Sigmoid colon (tissue), 7 donors: ENCODE measurements at regions of chr9 and their contacts with region 1.

Region 1: DNA sequence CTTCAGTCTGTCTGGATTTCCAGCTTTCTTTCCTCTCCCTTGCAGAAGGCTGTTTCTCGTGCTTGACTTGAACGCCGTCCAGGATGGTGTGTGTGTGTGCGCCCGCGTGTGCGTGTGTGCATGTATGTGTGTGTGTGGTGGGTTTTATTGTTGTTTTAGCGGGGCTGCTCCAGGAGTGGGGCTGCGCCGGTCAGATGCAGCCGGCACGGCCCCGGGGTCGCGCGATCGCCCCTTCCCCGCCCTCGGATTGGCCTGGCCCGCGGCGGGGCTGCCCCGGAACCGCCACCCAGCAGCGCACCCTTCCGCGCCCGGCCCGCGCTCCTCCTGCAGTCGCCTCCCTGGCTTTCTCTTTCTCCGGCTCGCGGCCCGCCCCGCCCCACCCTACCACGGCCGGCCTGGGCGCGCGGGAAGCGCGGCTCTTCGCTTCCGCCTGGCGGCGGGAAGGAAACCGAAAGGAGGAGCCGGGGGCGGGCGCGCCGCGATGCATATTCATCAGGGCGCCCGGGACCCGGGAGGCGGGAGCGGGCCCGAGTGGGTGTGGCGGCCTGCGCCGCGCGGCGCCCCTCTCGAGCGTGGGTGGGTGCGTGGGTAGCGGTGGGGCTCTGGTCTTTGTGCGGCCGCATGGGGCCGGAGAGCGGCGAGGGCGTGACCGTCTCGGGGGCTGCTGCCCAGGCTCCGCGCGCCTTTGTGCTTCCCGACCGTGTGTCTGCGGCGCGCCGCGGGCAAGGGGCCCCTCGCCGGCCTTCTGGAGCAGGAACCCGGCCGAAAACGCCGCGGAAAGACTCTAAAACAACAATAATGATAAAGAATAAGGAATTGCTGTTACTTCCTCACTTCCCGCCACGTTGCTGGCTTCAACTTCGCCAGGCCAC is 8.5 kb upstream of the NFIB start:
- DNase-seq: peak; percentile 96
- H3K4me3 ChIP-seq: peak overlapping the region; percentile 77 to 90 (median 82)
- H3K27ac ChIP-seq: peak overlapping the region; percentile 98 to 99 (median 98)
- H3K4me1 ChIP-seq: peaks cover 0 to 66% (median 56%) of the 10 kb centered on the region in 4 donors
- H3K27me3 ChIP-seq: no peaks in the 10 kb centered on the region
- CTCF ChIP-seq: peak in 3 of 4 experiments; percentile 37 to 75 (median 47)
- EP300 ChIP-seq: no peak
- POLR2A ChIP-seq: no peak

Region 2: DNA sequence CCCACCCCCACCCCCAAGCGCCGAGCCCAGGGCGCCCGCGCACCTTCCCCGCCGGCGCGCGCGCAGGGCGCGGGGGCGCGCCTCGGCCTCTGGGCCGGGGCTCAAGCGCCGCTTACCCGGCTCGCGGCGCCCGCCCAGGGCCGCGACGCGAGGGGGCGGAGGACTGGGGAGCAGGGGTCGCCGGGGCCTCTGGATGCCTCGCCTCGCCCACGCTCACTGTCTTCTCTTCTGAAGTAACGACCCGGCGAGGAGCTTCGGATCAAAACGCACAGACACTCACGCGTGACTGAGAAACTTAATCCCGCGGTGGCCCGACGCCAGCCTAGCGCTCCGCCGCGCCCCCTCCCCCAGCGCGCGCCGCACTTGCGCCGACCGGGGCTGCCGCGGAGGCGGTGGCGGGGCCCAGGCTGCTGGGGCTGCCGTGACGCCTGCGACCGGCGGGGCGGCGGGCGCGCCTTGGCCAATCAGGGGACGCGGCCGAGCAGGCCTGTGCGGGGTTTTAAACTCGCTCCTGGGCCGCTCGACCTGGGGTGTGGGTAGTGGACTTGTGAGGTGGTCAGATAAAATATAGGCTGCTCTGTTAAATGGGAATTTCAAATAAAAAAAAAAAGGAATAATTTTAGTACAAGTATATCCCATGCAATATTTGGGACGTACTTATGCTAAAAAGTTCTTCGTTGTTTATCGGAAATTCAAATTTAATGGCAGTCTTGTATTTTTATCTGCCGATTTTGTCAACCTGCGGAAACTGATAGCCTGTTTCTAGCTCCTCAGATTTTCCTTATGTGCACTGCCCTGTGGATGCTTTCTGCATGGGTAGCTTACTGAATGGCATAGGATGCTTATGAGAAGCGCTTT is 1042.9 kb before region 1 on chr9 and contains the start of gene MPDZ:
- intact Hi-C with region 1: loop called (anchors 5 kb)
- DNase-seq: peak; percentile 85
- H3K4me3 ChIP-seq: peak within 1 kb of the TSS; percentile 61 to 75 (median 70)
- H3K27ac ChIP-seq: peak within 1 kb of the TSS; percentile 90 to 97 (median 95)
- H3K4me1 ChIP-seq: peaks cover 0 to 74% (median 58%) of the 10 kb centered on the region in 4 donors
- H3K27me3 ChIP-seq: no peaks in the 10 kb centered on the region
- CTCF ChIP-seq: no peak
- EP300 ChIP-seq: no peak
- POLR2A ChIP-seq: no peak
- total RNA-seq, gene MPDZ: 62.8 to 72.2 (median 65.9) TPM

Region 3: GRCh38 chr9:13427587-13427986 is 894.9 kb before region 1 on chr9:
- intact Hi-C with region 1: loop called (anchors 5 kb)
- DNase-seq: no peak
- H3K4me3 ChIP-seq: no peak overlapping the region
- H3K27ac ChIP-seq: peak overlapping the region in 1 of 4 donors; percentile 12
- H3K4me1 ChIP-seq: peaks cover 0 to 29% (median 22%) of the 10 kb centered on the region in 4 donors
- H3K27me3 ChIP-seq: no peaks in the 10 kb centered on the region
- CTCF ChIP-seq: peak; percentile 54 to 72 (median 60)
- EP300 ChIP-seq: no peak
- POLR2A ChIP-seq: no peak

Region 4: DNA sequence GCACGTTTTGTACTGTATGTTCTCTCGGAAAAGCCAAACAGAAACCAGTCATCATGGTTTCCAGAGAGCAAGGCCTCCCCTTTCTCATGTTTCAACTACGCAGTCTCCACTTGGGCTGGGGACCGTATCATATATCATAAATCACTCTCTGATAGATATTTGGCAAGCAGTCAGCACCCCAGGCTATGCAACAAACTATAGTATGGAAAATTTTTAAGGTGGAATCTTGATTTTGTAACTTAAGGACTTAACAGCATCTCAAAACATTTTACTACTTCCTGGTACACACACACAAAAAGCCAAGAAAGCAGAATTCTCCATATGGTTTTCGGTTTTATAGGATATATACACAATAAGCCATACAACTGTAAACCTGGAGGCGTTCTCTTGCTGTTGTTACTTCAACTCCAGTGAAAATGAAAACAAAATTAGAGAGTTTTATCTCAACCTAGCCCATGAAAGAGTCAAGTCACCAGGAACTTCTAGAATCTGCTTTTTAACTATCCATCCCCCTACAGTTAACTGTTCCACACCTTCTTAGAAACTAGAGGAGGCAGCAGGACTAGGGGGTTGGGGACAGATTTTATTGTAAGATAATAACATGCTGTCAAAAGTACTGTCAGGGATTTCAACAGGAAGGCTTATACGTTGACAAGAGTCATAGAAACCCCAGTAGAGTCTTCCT is 291.9 kb before region 1 on chr9:
- intact Hi-C with region 1: loop called (anchors 2 kb)
- DNase-seq: no peak
- H3K4me3 ChIP-seq: peak overlapping the region in 3 of 4 donors; percentile 14 to 40 (median 30)
- H3K27ac ChIP-seq: peak overlapping the region; percentile 79 to 84 (median 81)
- H3K4me1 ChIP-seq: peaks cover 2 to 43% (median 23%) of the 10 kb centered on the region in 4 donors
- H3K27me3 ChIP-seq: no peaks in the 10 kb centered on the region
- CTCF ChIP-seq: no peak
- EP300 ChIP-seq: peak in 1 of 4 donors; percentile 58
- POLR2A ChIP-seq: no peak

Region 5: DNA sequence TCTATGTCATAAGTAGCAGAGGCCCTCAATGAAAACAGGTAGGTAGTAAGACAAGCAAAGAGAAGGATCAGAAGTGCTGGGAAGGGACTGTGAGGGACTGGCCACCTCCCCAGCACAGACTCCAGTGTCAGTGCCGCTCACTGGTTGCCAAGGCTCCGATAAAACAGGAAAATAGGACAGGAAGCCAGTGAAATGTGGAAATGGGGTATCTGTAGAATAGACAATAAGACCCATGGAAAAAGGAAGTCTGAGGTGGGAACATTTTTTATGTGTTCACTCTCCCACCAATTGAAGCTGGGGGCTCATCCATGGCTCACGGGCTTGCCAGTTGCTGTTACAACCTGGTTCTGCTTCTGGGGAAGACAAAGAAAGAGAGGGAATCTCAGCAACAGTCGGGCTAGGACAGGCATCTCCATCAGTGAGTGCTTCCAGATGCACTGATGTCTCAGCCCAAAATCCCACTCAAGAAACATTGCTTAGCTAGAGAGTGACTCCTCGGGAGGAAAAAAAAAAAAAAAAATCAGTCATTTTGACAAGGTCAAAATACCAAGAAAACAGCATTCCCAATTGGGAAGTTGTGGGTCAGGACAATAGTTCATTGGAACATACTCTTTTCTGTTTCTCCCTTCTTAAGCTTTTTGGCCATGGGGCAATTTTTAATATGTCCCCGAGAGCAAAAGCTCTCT is 19.1 kb after region 1 on chr9:
- intact Hi-C with region 1: loop called (anchors 2 kb)
- DNase-seq: no peak
- H3K4me3 ChIP-seq: no peak overlapping the region
- H3K27ac ChIP-seq: peak overlapping the region in 2 of 4 donors; percentile 55 to 83
- H3K4me1 ChIP-seq: peaks cover 0 to 54% (median 30%) of the 10 kb centered on the region in 4 donors
- H3K27me3 ChIP-seq: peaks cover 0 to 37% (median 27%) of the 10 kb centered on the region in 3 donors
- CTCF ChIP-seq: no peak
- EP300 ChIP-seq: no peak
- POLR2A ChIP-seq: no peak

Region 6: GRCh38 chr9:14347406-14348122 is 25.1 kb after region 1 on chr9:
- intact Hi-C with region 1: loop called (anchors 2 kb)
- DNase-seq: peak; percentile 77
- H3K4me3 ChIP-seq: peak overlapping the region; percentile 34 to 56 (median 47)
- H3K27ac ChIP-seq: peak overlapping the region; percentile 74 to 83 (median 79)
- H3K4me1 ChIP-seq: peaks cover 0 to 82% (median 53%) of the 10 kb centered on the region in 4 donors
- H3K27me3 ChIP-seq: peaks cover 6 to 79% (median 49%) of the 10 kb centered on the region in 3 donors
- CTCF ChIP-seq: no peak
- EP300 ChIP-seq: no peak
- POLR2A ChIP-seq: no peak

Region 7: DNA sequence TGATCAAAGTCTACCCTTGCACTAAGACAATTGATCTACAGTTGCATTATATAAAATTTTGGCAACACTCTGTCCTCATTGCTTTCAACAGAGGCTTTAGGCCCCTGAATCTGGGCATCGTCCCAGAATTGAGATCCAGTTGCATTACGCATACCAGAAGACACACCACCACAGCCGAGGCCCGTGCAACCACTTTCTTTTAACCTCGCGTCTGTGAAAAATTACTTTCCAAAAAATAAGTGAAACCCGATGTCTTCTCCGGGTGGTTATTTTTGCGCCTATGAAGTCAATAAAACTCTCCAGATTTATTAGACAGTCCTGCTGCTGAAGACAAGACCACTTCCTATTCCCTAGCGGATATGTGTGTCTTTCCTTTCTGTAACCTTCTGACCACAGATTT is 43.6 kb after region 1 on chr9:
- intact Hi-C with region 1: loop called (anchors 5 kb)
- DNase-seq: peak; percentile 86
- H3K4me3 ChIP-seq: peak overlapping the region in 1 of 4 donors; percentile 6
- H3K27ac ChIP-seq: peak overlapping the region; percentile 31 to 78 (median 57)
- H3K4me1 ChIP-seq: peaks cover 0 to 58% (median 42%) of the 10 kb centered on the region in 4 donors
- H3K27me3 ChIP-seq: no peaks in the 10 kb centered on the region
- CTCF ChIP-seq: no peak
- EP300 ChIP-seq: no peak
- POLR2A ChIP-seq: no peak